ENCODE measurements at regions of chr7 and their contacts with region 1.

Region 1: DNA sequence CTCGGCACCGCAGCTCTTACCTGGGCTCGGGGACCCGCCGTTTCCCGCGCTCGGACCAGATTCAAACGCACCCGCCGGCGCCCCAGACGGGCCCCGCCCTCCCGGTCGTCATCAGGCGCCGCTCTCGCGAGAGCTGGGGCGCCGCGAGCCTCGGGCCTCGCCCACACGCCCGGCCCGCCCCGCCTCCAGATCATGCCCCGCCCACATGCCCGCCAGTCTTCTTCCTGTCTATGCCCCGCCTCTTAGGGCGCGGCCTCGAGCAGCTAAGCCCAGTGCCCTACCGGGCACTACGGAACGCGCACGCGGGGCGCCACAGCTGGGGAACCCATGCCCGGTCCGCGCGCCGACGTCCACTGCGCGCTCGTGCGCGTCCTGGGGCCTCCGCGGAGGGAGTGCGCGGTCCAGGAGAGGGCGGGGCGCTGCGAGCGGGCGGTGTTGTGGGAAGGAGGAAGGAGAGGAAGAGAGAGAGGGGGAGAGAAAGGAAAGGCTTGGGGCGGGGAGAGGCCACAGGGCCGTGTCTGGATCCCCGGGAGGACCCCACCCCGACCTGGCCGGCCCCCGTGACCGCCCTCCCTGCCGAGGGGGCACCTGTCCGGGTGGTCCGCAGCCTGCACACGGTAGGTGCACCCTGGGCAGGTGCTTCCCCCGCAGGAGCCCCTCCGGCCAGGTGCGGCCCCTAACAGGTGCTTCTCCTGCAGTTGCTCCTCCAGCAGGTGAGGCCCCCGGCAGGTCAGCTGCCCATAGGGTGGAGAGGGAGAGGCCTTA is at the start of gene NCAPG2:
- DNase-seq: peak; percentile 93 to 99 (median 98)

Region 2: DNA sequence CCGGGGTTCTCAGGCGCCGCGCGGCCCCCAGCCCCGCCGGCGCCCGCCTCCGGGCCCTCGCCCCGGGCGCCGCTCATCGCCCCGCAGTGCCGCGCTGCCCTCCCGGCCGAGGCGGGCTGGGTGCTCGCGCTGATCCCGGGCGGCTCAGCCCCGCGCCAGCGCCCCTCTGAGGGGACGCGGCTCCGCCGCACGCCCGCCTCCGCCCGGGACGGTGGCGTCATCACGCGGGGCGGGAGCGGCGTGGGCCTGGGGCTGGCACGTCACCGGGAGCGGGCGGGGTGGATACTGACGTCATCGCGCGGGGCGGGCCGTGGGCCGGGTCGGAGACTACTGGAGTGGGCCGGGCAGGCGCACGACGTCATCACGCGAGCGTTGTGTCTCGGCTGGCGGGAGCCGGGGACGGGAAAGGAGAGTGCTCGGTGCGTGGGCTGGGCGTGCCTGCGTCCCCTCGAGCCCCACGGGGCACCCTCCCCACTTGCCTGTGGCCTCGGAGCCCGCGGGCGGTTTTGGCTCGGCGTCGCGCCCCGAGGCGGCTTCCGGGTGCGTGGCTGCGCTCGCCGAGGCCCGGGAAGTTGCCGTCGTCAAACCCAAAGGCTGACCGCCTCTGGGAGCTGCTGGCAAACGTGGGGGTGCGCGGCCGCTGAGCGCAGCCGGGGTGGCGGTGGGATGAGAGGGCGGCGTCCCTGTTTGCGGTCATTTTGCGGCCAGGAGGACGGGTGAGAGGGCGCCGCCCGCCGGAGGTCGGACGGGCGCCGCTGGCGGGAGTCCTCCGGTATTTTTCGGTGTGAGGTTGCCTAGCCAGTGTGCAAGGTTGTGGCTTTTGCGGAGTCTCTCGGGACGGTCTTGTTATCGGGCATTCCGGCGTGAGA is 124.7 kb after region 1 on chr7 and contains the start of gene ESYT2:
- intact Hi-C with region 1: loop called (anchors 2 kb)
- DNase-seq: peak; percentile 96 to 100 (median 100)

Region 3: DNA sequence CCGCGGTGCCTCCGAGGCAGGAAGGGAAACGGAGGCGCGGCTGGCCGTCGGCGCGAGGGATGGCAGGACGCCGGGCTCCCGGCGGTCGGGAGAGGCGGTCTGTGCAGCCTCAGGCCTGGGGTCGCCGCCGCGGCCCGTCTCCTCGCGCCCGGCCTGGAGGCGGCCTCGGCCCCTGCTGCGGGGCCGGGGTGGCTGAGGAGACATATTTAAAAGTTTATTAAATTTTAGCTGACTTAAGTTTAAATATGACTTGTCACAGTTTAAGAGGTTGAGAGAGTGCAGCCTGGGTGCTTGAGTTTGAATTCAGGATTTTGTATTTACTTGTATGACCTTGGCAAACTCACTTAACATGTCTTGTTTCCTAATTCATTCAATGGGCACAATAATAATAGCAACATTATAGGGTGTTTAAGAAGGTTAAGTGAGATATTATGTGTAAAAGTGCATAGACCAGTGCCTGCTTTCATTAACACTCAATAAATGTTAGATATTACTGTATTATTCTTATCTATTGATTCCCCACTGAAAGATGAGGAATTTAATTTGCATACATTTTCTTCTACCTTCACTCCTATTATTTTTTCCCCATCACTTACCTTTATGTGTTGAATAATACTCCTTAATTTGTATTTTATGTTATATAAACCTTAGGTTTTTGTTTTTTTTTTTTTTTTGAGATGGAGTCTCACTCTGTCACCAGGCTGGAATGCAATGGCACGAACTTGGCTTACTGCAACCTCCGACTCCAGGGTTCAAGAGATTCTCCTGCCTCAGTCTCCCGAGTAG is 152.2 kb after region 1 on chr7:
- intact Hi-C with region 1: loop called (anchors 10 kb)
- DNase-seq: peak in 3 of 42 donors; percentile 3 to 40 (median 30)

Measured in head of caudate nucleus (tissue), 42 donors.